Sigmoid colon (tissue), 7 donors: ENCODE measurements at regions of chr15 and their contacts with region 1.

Region 1: DNA sequence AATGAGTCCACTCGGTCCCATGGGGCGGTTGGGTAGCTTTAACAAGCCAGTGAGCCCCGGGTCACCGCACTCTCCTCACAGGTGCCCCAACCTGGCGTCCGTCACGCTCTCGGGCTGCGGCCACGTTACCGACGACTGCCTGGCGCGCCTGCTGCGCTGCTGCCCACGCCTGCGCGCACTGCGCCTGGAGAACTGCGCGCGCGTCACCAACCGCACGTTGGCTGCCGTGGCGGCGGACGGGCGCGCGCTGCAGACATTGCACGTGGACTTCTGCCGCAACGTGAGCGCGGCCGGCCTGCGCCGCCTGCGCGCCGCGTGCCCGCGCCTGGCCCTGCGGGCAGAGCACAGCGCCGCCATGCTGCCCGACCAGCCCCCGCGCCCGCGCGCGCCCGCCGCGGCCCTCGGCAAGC is 3.4 kb downstream of the FBXL22 start:
- DNase-seq: peak; percentile 93
- H3K4me3 ChIP-seq: peak overlapping the region; percentile 42 to 68 (median 60)
- H3K27ac ChIP-seq: peak overlapping the region; percentile 87 to 95 (median 92)
- H3K4me1 ChIP-seq: peaks cover 0 to 79% (median 41%) of the 10 kb centered on the region in 4 donors
- H3K27me3 ChIP-seq: no peaks in the 10 kb centered on the region
- CTCF ChIP-seq: no peak
- EP300 ChIP-seq: no peak
- POLR2A ChIP-seq: peak; percentile 69 to 74

Region 2: DNA sequence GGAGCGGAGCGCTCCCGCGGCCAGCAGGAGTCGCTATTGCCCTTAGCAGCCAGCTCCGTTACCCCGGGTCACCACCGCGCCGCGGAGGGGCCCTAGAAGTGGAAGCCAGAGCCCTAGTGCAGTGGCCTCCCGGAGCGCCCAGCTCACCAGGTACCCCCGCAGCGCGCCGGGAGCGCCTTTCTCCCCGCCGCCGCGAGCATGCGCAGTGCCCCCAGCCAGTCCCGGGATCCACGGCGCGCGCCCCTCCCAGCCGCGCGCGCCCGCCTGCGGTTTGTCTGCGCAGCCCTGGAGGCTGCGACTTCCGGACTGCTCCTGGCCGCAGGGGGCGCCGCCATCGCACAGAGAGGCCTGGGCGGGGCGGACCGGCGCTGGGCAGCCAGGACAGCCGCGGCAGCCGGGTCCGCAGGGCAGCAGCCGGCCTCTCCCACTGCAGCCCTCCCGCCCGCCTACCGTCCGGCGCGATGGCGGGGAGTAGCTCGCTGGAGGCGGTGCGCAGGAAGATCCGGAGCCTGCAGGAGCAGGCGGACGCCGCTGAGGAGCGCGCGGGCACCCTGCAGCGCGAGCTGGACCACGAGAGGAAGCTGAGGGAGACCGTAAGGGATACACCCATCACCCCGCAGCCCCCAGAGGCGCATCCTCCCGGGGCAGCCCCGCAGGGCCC is 552.4 kb before region 1 on chr15:
- intact Hi-C with region 1: loop called (anchors 10 kb)
- DNase-seq: peak; percentile 96
- H3K4me3 ChIP-seq: peak overlapping the region; percentile 78 to 90 (median 87)
- H3K27ac ChIP-seq: peak overlapping the region; percentile 97 to 99 (median 98)
- H3K4me1 ChIP-seq: peaks cover 0 to 56% (median 46%) of the 10 kb centered on the region in 4 donors
- H3K27me3 ChIP-seq: no peaks in the 10 kb centered on the region
- CTCF ChIP-seq: peak; percentile 85 to 97 (median 89)
- EP300 ChIP-seq: no peak
- POLR2A ChIP-seq: peak in 1 of 2 donors; percentile 11

Region 3: GRCh38 chr15:63277038-63277892 is 323.4 kb before region 1 on chr15 and contains the start of gene APH1B:
- intact Hi-C with region 1: loop called (anchors 5 kb)
- DNase-seq: peak; percentile 91
- H3K4me3 ChIP-seq: peak within 1 kb of the TSS; percentile 81 to 97 (median 94)
- H3K27ac ChIP-seq: peak within 1 kb of the TSS; percentile 83 to 90 (median 90)
- H3K4me1 ChIP-seq: peaks cover 0 to 14% (median 6%) of the 10 kb centered on the region in 4 donors
- H3K27me3 ChIP-seq: no peaks in the 10 kb centered on the region
- CTCF ChIP-seq: no peak
- EP300 ChIP-seq: no peak
- POLR2A ChIP-seq: peak in 1 of 2 donors; percentile 19
- total RNA-seq, gene APH1B: 7.9 to 11.0 (median 9.9) TPM

Region 4: GRCh38 chr15:63466378-63467192 is 134.0 kb before region 1 on chr15:
- intact Hi-C with region 1: loop called (anchors 5 kb)
- DNase-seq: no peak
- H3K4me3 ChIP-seq: no peak overlapping the region
- H3K27ac ChIP-seq: peak overlapping the region in 1 of 4 donors; percentile 35
- H3K4me1 ChIP-seq: peaks cover 0 to 55% (median 46%) of the 10 kb centered on the region in 4 donors
- H3K27me3 ChIP-seq: no peaks in the 10 kb centered on the region
- CTCF ChIP-seq: peak; percentile 28 to 73 (median 64)
- EP300 ChIP-seq: no peak
- POLR2A ChIP-seq: no peak

Region 5: DNA sequence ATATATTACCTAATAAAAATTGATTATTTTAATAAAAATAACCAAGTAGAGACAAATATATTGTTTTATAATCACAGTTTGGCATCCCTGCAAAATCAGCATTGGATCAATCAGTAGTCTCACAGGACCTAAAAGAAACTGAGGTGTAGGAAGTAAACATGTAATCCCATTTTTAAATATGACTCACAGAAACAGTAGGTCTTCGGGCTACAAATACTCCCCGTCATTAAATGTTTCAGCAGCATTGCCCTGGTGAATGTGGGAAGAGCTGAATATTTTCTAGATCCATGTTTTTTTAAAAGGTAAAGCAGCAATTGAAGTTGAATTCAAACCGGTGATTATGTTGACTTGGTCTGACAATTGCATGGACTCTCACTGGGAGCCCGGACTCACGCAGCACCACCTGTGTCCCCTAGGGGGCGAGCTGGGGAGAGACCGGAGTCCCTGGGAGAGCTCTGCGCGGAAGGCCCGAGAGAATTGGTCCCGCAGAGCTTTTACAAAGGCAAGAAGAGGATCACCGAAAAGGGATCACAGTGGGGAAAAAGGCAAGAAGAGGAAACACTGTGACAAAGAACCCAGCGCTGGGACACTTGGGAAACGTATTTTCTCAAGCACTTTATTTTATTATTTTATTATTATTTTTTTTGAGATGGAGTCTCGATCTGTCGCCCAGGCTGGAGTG is 113.4 kb before region 1 on chr15:
- intact Hi-C with region 1: loop called (anchors 2 kb)
- DNase-seq: peak; percentile 94
- H3K4me3 ChIP-seq: no peak overlapping the region
- H3K27ac ChIP-seq: peak overlapping the region in 1 of 4 donors; percentile 10
- H3K4me1 ChIP-seq: peaks cover 0 to 16% (median 9%) of the 10 kb centered on the region in 4 donors
- H3K27me3 ChIP-seq: no peaks in the 10 kb centered on the region
- CTCF ChIP-seq: peak; percentile 70 to 93 (median 90)
- EP300 ChIP-seq: no peak
- POLR2A ChIP-seq: no peak

Region 6: GRCh38 chr15:63504979-63505841 is 95.4 kb before region 1 on chr15:
- intact Hi-C with region 1: loop called (anchors 1 kb)
- DNase-seq: peak; percentile 82
- H3K4me3 ChIP-seq: peak overlapping the region; percentile 75 to 87 (median 80)
- H3K27ac ChIP-seq: peak overlapping the region; percentile 94 to 99 (median 98)
- H3K4me1 ChIP-seq: peaks cover 5 to 79% (median 68%) of the 10 kb centered on the region in 4 donors
- H3K27me3 ChIP-seq: no peaks in the 10 kb centered on the region
- CTCF ChIP-seq: peak in 3 of 4 experiments; percentile 24 to 53 (median 50)
- EP300 ChIP-seq: no peak
- POLR2A ChIP-seq: no peak